Vagina (tissue), 2 donors: ENCODE measurements at regions of chr3 and their contacts with region 1.

Region 1: DNA sequence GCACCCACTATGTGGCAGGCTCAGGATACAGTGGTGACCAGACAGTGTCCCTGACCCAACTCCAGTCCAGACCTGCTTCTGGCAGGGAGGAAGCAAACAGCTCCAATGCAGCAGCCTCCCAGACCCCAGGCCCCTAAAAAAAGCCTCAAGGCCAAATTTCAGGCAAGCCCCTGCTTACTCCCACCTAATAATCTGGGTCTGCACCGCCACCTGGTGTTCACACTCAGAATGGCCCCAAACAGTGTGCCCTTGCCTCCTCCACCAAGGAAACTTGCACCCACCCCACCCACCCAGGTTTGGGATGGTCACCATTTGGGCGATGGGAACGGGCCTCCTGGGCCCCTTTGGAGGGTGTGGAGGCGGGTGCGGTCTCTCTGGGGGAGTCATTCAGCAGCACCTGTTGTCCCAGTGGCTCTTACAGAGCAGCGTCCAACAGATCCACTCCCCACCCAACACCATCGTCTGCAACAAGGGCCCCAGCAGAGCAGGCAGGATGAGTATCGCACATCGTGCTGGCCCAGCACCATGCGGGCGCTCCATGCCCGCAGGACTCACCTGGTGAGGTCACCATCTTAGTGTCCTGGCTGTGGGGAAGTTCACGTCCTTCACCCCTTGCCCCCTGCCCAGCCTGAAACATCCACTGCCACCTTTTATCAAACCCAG is 17.3 kb downstream of the C3orf18 start:
- DNase-seq: no peak
- H3K4me3 ChIP-seq: no peak overlapping the region
- H3K27ac ChIP-seq: no peak overlapping the region
- H3K4me1 ChIP-seq: no peaks in the 10 kb centered on the region
- H3K27me3 ChIP-seq: no peaks in the 10 kb centered on the region
- CTCF ChIP-seq: peak; percentile 31 to 70 (median 47)
- POLR2A ChIP-seq: no peak

Region 2: DNA sequence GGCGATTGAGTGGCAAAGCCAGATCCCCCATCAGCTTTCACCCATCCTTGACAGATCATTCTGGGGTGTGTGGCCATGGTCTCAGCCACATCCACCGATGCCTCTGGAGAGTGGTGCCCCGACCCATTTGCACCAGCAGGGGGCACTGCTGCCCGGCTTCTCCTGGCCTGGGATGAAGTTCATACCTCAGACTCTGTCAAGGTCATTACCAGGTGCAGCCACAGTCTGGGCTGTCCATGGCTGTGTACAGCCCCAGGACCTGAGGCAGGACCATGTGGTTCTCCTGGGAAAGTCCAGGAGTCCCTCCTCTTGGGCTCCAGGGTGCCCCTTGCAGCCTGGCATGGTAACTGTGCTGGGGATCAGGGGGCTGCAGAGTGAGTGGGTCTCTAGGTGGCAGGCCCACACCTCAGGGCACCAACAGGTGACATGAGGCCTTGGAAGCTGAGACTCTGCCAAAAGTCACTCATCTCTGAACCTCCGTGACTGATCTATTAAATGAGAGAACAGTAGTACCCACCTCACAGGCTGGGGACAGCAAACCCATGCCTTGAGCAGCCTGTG is 114.0 kb before region 1 on chr3:
- intact Hi-C with region 1: loop called (anchors 5 kb)
- DNase-seq: no peak
- H3K4me3 ChIP-seq: no peak overlapping the region
- H3K27ac ChIP-seq: no peak overlapping the region
- H3K4me1 ChIP-seq: no peaks in the 10 kb centered on the region
- H3K27me3 ChIP-seq: no peaks in the 10 kb centered on the region
- CTCF ChIP-seq: peak; percentile 40 to 58 (median 43)
- POLR2A ChIP-seq: no peak